ENCODE measurements at regions of chr15 and their contacts with region 1.

Region 1: GRCh38 chr15:85421116-85421925 is 40.9 kb downstream of the AKAP13 start:
- DNase-seq: no peak
- H3K4me3 ChIP-seq: no peak overlapping the region
- H3K4me3 Mint-ChIP-seq: no peak overlapping the region
- H3K27ac ChIP-seq: no peak overlapping the region
- H3K27ac Mint-ChIP-seq: no peak overlapping the region
- H3K4me1 ChIP-seq: no peaks in the 10 kb centered on the region
- H3K4me1 Mint-ChIP-seq: peaks cover 10% of the 10 kb centered on the region
- H3K27me3 ChIP-seq: no peaks in the 10 kb centered on the region
- H3K27me3 Mint-ChIP-seq: no peaks in the 10 kb centered on the region
- CTCF ChIP-seq: no peak

Region 2: GRCh38 chr15:85380217-85380811 is 41.0 kb before region 1 on chr15 and contains the start of gene AKAP13:
- intact Hi-C with region 1: no loop called
- DNase-seq: peak; percentile 97 to 98 (median 98)
- H3K4me3 ChIP-seq: peak within 1 kb of the TSS; percentile 67 to 92 (median 87)
- H3K4me3 Mint-ChIP-seq: peak within 1 kb of the TSS; percentile 93 to 97
- H3K27ac ChIP-seq: peak within 1 kb of the TSS; percentile 71 to 75
- H3K27ac Mint-ChIP-seq: peak within 1 kb of the TSS; percentile 86 to 94 (median 89)
- H3K4me1 ChIP-seq: peaks cover 12 to 25% of the 10 kb centered on the region in 2 donors
- H3K4me1 Mint-ChIP-seq: peaks cover 34% of the 10 kb centered on the region
- H3K27me3 ChIP-seq: no peaks in the 10 kb centered on the region
- H3K27me3 Mint-ChIP-seq: peaks cover 2 to 6% (median 3%) of the 10 kb centered on the region in 3 donors
- CTCF ChIP-seq: no peak
- polyA plus RNA-seq, gene AKAP13: 47.9 to 99.7 (median 92.6) TPM

Region 3: DNA sequence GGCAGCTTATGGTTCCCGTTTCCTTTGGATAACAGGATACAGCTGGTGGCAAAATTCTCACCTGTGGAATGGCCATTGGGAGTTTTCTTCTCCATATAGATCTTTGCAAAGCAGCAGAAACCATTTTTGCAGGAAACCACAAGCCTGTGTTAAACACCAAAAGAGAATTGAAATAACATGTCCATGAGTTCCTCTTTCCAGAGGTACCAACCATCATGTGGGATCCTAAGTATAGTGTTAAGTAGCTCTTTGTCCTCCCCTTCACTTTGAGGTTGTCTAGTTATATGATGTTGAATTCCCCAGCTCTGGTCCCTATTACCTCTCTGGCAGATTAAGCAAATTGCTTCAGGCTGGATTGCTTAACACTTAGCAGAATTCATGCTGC is 54.0 kb after region 1 on chr15:
- intact Hi-C with region 1: loop called in 1 of 2 experiments (anchors 10 kb)
- DNase-seq: peak in 2 of 3 donors; percentile 8 to 22
- H3K4me3 ChIP-seq: no peak overlapping the region
- H3K4me3 Mint-ChIP-seq: no peak overlapping the region
- H3K27ac ChIP-seq: no peak overlapping the region
- H3K27ac Mint-ChIP-seq: peak overlapping the region in 1 of 7 donors; percentile 26
- H3K4me1 ChIP-seq: peaks cover 11% of the 10 kb centered on the region in 2 donors
- H3K4me1 Mint-ChIP-seq: peaks cover 26% of the 10 kb centered on the region
- H3K27me3 ChIP-seq: no peaks in the 10 kb centered on the region
- H3K27me3 Mint-ChIP-seq: peaks cover 0 to 2% (median 0%) of the 10 kb centered on the region in 3 donors
- CTCF ChIP-seq: no peak

Measured in CD14-positive monocyte (primary cell).